ENCODE measurements at regions of chr13 and their contacts with region 1.

Region 1: DNA sequence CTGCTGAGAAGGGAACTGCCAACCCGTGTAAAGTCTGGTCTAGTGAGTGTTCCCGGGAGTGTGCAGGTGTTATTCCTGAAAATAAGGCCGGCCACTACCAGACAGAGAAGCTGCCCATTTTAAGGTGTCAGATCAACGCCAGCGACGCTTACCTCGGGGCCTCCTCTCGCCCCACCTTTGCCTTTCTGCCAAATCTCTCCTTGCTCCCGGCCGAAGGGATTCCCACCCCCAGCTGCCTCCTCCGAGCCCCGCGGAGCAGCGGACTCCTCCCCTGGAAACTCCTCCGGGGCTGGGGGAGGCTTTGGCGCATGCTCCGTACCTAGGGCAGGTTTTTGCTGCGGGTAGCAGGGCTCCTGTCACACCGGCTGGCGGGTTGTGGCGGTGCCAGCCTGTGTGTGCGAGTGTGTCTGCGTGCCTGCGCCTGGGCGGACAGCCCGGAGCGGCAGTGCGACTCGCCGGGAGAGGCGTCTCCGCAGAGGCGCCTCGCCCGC is at the start of gene HS6ST3:
- DNase-seq: peak; percentile 14
- H3K4me3 ChIP-seq: peak within 1 kb of the TSS; percentile 38 to 53 (median 50)
- H3K27ac ChIP-seq: no peak within 1 kb of the TSS
- H3K4me1 ChIP-seq: peaks cover 5% of the 10 kb centered on the region
- H3K27me3 ChIP-seq: peaks cover 48% of the 10 kb centered on the region
- CTCF ChIP-seq: no peak
- total RNA-seq, gene HS6ST3: 0.05 TPM in 1 of 2 donors, not detected in the other

Region 2: GRCh38 chr13:96053011-96053703 is 36.6 kb before region 1 on chr13 and contains the start of gene UGGT2:
- CTCF ChIA-PET with region 1: interaction called, 23 read pairs
- dilution Hi-C with region 1: no loop called
- in situ Hi-C with region 1: no loop called
- intact Hi-C with region 1: no loop called
- DNase-seq: peak; percentile 90
- H3K4me3 ChIP-seq: peak within 1 kb of the TSS; percentile 82 to 97 (median 92)
- H3K27ac ChIP-seq: peak within 1 kb of the TSS; percentile 67
- H3K4me1 ChIP-seq: no peaks in the 10 kb centered on the region
- H3K27me3 ChIP-seq: no peaks in the 10 kb centered on the region
- CTCF ChIP-seq: no peak
- total RNA-seq, gene UGGT2: 27.3 to 53.5 TPM

Region 3: DNA sequence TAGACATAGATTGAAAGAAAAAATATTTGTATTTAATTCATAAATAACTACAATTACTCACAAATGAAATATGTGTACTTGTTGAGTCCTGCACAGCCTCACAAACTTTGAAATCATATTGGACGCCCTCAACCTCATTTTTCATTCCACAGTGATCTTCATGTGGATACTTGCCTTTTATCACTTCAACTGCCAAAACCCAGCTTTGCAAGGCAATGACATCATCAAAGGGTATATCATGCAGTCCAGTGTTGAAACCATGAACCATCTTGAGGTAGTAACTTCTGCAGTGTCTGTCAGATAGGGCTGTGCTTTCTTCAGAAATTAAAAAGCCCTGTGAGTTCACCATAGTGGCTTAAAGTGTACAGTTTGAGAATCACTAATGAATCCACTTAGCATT is 82.3 kb after region 1 on chr13:
- CTCF ChIA-PET with region 1: no interaction called
- dilution Hi-C with region 1: no loop called
- in situ Hi-C with region 1: no loop called
- intact Hi-C with region 1: no loop called
- DNase-seq: peak; percentile 91
- H3K4me3 ChIP-seq: no peak overlapping the region
- H3K27ac ChIP-seq: no peak overlapping the region
- H3K4me1 ChIP-seq: no peaks in the 10 kb centered on the region
- H3K27me3 ChIP-seq: no peaks in the 10 kb centered on the region
- CTCF ChIP-seq: no peak